Left cardiac atrium (tissue), 4 donors: ENCODE measurements at regions of chr1 and their contacts with region 1.

Region 1: DNA sequence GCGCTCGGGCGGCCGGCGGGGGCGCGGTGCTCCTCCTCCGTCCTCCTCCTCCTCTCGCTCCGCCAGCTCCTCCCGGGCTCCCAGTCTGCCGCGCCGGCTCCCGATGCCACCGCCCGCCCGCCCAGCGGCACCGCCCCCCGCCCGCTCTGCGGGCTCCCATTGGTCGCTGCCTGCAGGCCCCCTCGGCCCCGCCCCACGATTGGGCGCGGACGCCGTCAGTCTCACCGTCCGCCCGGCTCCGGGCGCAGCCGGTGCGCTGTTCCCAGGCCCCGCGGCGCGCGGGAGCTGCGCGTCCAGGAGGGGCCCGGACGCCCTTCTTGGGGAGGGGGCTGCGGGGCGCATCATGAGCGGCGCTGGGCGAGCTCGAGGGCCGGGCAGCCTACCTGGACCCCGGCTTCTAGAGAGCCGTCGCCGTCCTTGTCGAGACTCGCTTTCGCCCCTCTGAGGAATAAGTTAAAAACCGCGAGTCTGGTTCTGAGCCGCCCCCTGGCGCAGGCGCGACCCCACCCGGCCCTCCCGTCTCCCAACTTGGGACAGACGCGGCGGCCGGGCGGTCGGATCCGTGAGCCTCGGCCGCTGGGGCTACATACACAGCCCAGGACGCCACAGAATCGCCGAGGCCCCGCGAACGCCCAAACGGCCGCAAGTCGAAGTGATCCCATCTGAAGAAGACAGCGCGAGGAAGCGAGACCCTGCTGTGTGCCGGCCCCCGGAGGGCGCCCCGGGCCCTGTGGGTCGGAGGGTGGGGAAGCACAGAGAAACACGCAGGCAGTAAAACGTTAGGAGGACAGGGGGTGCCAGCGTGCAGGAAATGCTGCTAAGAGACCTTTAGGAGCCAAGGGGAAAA is at the start of gene SIPA1L2:
- DNase-seq: peak; percentile 94
- ATAC-seq: peak; percentile 97 to 98
- total RNA-seq, gene SIPA1L2: 42.3 to 57.1 TPM

Region 2: DNA sequence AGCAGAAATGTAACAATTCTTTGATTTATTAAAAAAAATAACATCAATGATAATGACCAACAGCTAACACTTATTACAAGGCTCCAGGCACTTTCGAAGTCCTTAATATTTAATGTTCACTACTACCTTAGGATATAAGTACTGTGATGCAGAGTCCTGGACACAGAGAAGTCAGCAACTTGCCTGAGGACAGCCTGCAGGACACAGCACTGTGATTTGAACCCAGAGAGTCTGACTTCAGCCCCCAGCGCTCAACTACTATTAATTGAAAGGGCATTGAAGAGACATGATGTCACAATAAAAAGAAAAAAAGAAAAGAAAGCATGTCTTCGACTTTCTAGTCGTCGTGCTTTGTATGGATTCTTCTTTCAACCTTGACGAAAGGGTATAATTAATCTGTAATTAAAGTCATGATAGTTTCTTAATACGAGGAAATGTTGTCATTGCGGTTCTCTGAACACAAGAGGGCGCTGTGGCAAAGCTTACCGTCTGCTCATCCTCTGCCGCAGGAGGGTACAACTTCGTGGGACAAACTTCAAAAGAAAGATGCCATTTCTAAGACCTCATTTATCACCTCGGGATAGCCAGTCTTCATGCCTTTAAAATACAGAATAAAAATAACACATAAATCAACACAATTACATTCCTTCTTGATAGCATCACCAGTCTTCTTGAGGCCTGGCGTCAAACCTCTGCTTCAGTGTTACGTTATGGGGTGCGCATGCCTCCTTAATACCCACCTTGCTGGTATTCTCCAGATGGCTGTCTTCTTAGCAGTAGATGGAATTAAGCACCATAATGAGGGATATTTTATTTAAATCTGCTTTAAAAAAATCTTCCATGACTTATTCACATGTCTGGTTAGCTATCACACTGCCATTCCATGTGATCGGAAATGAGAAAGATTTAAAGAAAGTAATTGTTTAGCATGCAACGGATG is 763.6 kb before region 1 on chr1:
- intact Hi-C with region 1: loop called in 1 of 2 experiments (anchors 5 kb)
- DNase-seq: peak; percentile 67
- ATAC-seq: peak in 1 of 2 donors; percentile 38

Region 3: DNA sequence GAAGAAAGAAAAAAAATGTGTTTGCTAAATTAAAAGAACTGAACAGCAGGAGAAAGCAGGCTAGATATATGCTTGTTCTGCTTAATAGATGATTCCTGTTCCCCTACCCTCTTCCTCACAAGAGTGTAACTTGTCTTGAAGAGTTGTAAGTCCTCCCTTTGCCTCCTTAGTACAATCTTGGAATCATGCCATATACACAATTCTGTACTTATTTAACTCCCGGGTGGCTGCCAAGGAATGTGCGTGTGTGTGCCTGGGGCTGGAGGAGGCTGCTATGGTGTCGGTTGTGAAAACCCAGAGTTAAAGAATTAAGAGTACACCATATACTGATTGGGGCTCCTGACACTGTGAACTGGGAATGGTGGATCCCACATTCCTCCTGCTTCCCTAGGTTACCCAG is 194.5 kb before region 1 on chr1:
- intact Hi-C with region 1: loop called in 1 of 2 experiments (anchors 10 kb)
- DNase-seq: peak; percentile 28
- ATAC-seq: peak; percentile 35 to 36

Region 4: DNA sequence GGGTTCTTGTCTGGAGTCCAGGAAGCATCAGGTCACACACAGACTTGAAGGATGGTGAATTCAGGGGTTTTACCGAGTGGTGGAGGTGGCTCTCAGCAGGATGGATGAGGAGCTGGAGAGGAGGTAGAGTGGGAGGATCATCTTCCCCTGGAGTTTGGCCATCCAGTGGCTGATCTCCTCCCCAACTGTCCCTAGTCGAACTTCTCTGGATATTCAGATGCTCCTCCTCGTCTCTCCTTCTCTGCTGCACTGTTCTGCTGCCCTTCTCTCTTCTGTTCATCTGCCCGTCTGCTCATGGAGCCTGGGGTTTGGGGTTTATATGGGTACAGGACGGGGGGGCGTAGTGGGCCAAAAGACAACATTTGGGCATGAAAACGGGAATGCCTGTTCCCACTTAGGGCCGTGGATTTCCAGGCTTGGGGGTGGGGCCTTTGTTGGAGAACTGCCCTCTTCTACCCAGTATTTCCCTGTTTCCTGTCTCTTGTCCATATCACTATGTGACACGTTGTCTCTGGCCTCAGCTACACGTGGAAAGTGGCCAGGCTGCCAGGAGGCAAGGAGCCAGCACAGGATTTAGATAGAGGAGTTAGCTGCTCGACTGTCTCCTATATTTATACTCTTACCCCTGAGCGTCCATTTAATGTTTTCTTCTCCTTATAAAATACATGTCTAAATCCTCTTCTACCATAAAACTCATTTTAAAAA is 77.1 kb before region 1 on chr1:
- intact Hi-C with region 1: loop called in 1 of 2 experiments (anchors 10 kb)
- DNase-seq: peak; percentile 85
- ATAC-seq: peak; percentile 85 to 91

Region 5: DNA sequence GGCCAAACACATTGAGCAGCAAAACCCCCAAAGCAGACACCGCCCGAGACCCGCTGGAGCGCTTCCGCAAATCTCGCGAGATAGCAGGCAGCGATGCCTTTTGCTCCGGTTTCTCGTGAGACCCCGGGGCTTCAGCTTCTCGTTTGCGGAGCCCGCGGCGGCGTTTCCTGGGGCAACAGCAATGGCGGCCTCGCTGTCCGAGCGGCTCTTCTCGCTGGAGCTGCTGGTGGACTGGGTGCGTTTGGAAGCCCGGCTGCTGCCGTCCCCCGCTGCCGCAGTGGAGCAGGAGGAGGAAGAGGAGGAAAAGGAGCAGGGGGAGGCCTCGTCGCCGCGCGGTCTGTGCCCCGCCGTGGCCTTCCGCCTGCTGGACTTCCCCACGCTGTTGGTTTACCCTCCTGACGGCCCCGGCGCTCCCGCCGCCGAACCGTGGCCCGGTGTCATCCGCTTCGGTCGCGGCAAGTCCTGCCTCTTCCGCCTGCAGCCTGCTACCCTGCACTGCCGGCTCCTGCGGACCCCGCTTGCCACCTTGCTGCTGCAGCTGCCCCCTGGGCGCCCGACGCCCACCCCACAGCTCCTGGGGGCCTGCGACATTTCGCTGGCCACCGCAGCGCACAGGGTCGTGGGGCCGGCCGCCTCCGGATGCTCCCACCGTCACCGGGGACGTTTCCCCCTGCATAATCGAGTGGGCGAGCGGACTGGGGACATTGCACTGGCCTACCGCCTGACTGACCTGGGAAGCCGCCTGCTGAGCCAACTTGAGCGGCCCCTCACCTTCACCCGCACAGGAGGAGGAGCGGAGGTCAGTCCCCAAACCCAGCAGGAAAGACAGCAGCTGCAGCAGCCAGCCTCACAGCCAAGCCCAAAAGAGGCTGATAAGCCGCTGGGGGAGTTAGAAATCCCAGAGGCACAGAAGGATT is 175.3 kb after region 1 on chr1 and contains the start of gene MAP10:
- intact Hi-C with region 1: loop called in 1 of 2 experiments (anchors 10 kb)
- DNase-seq: peak; percentile 84
- ATAC-seq: peak; percentile 87 to 91
- total RNA-seq, gene MAP10: 2.5 to 3.0 TPM

Region 6: GRCh38 chr1:233025157-233025915 is 395.1 kb after region 1 on chr1:
- intact Hi-C with region 1: loop called (anchors 2 to 5 kb)
- DNase-seq: peak; percentile 30
- ATAC-seq: peak in 1 of 2 donors; percentile 50